ENCODE measurements at regions of chr7 and their contacts with region 1.

Region 1: GRCh38 chr7:99918959-99919813 is at the start of gene TRIM4:
- DNase-seq: peak; percentile 92 to 95
- ATAC-seq: peak; percentile 98 to 100
- H3K4me3 ChIP-seq: peak within 1 kb of the TSS; percentile 81
- H3K27ac ChIP-seq: peak within 1 kb of the TSS; percentile 90 to 98
- H3K4me1 ChIP-seq: peaks cover 13% of the 10 kb centered on the region; the same call in 2 of the 3 replicates
- CTCF ChIP-seq: peak; percentile 9; the same call in 1 of the 3 replicates
- EP300 ChIP-seq: no peak
- POLR2A ChIP-seq: peak; percentile 72
- RAD21 ChIP-seq: peak in 1 of 2 experiments; percentile 29; a peak in 1 of 5 replicates
- polyA plus RNA-seq, gene TRIM4: 33.8 and 34.3 TPM in 2 replicates

Region 2: DNA sequence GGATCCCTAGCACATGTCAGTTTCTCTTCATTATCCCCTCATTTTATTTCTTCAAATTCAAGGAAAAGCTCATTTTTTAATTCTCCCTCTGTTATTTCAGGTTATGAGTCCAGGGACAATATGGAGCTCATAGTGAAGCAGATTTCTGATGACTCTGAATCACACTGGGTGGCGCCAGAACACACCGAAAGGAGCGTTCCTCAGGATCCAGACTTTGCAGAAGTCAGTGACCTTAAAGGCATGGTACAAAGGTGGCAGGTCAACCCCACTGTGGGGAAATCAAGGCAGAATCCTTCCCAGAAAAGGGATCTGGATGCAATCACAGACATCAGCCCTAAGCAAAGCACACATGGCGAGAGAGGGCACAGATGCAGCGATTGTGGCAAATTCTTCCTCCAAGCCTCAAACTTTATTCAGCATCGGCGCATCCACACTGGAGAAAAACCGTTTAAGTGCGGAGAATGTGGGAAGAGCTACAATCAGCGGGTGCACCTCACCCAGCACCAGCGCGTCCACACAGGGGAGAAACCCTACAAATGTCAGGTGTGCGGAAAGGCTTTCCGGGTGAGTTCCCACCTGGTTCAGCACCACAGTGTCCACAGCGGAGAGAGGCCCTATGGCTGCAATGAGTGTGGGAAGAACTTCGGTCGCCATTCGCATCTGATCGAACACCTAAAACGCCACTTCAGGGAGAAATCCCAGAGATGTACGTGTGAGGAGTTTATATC is 393.3 kb before region 1 on chr7:
- CTCF ChIA-PET with region 1: no interaction called
- POLR2A ChIA-PET with region 1: no interaction called
- DNase-seq: peak in 1 of 2 experiments; percentile 38
- ATAC-seq: peak; percentile 59 to 77; a peak in 4 of 6 replicates
- H3K4me3 ChIP-seq: no peak overlapping the region
- H3K27ac ChIP-seq: no peak overlapping the region
- H3K4me1 ChIP-seq: no peaks in the 10 kb centered on the region
- CTCF ChIP-seq: no peak
- EP300 ChIP-seq: no peak
- POLR2A ChIP-seq: no peak
- RAD21 ChIP-seq: peak; percentile 35 to 72; a peak in 4 of 5 replicates

Region 3: GRCh38 chr7:99631295-99632109 is 287.7 kb before region 1 on chr7:
- CTCF ChIA-PET with region 1: interaction called, 21 read pairs
- POLR2A ChIA-PET with region 1: interaction called, 15 read pairs
- DNase-seq: peak; percentile 48 to 56
- ATAC-seq: peak; percentile 86 to 87
- H3K4me3 ChIP-seq: no peak overlapping the region
- H3K27ac ChIP-seq: peak overlapping the region in 1 of 2 experiments; percentile 15; a peak in 2 of 6 replicates
- H3K4me1 ChIP-seq: no peaks in the 10 kb centered on the region
- CTCF ChIP-seq: peak; percentile 63
- EP300 ChIP-seq: no peak
- POLR2A ChIP-seq: no peak
- RAD21 ChIP-seq: peak; percentile 83 to 87

Region 4: GRCh38 chr7:99806839-99807478 is 112.2 kb before region 1 on chr7:
- CTCF ChIA-PET with region 1: no interaction called
- POLR2A ChIA-PET with region 1: no interaction called
- DNase-seq: no peak
- ATAC-seq: no peak
- H3K4me3 ChIP-seq: no peak overlapping the region
- H3K27ac ChIP-seq: no peak overlapping the region
- H3K4me1 ChIP-seq: no peaks in the 10 kb centered on the region
- CTCF ChIP-seq: no peak
- EP300 ChIP-seq: no peak
- POLR2A ChIP-seq: no peak
- RAD21 ChIP-seq: no peak

Region 5: DNA sequence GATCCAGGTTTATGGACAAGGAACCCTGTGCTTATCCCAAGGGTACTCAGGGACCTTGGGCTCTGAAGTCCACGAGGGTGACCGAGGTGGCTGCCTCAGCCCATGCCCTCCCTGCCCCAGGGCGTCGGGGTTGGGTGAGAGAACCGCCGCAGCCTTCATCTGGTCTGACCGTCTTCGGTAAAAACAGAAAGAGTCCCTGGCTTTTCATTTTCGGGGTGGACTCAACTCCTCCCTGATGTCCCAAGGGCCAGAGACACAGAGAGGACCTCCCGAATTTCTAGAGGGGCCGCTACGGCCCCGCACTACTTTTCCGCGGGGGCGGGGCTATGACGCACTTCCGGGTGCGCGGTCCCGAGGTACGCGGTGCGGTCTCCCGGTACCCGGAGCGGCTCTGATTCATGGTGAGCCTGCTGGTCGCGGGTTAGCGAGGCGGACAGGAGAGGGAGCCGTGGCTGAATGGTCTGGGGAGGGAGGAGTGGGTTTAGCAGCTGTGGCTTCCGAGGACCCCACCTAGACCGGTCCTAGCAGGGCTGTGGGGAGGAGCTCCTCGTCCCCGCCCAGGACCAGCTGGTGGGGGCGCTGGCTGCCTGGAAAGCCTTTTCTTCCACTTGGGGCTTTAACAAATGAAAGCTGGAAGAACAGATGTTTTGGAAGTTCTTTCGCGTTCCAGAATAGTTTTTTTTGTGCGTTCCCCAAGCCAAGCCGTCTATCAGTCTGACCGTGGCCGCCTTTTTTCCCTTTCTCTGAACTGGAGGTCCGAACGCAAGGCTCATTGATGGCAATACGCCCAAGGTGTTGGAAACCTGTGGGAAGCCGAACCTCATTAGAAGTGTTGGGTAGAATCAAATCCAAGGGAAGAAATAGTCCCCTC is 130.5 kb after region 1 on chr7 and contains the start of gene ZSCAN21:
- CTCF ChIA-PET with region 1: no interaction called
- POLR2A ChIA-PET with region 1: interaction called, 14 read pairs
- DNase-seq: peak; percentile 79 to 88
- ATAC-seq: peak; percentile 94 to 96
- H3K4me3 ChIP-seq: peak within 1 kb of the TSS; percentile 85
- H3K27ac ChIP-seq: peak within 1 kb of the TSS; percentile 89 to 93
- H3K4me1 ChIP-seq: peaks cover 7% of the 10 kb centered on the region; the same call in 2 of the 3 replicates
- CTCF ChIP-seq: peak; percentile 20; the same call in 1 of the 3 replicates
- EP300 ChIP-seq: no peak
- POLR2A ChIP-seq: peak; percentile 87
- RAD21 ChIP-seq: no peak
- polyA plus RNA-seq, gene ZSCAN21: 17.9 and 18.3 TPM in 2 replicates

Region 6: GRCh38 chr7:100190048-100190711 is 271.0 kb after region 1 on chr7:
- CTCF ChIA-PET with region 1: no interaction called
- POLR2A ChIA-PET with region 1: no interaction called
- DNase-seq: peak; percentile 58 to 60
- ATAC-seq: peak; percentile 84 to 89
- H3K4me3 ChIP-seq: no peak overlapping the region
- H3K27ac ChIP-seq: peak overlapping the region; percentile 62 to 63; a peak in 3 of 6 replicates
- H3K4me1 ChIP-seq: peaks cover 4% of the 10 kb centered on the region; the same call in 2 of the 3 replicates
- CTCF ChIP-seq: peak; percentile 63
- EP300 ChIP-seq: no peak
- POLR2A ChIP-seq: no peak
- RAD21 ChIP-seq: peak; percentile 54 to 62; a peak in 4 of 5 replicates